Cardiac septum (tissue), 1 donor: ENCODE measurements at regions of chr16 and their contacts with region 1.

Region 1: DNA sequence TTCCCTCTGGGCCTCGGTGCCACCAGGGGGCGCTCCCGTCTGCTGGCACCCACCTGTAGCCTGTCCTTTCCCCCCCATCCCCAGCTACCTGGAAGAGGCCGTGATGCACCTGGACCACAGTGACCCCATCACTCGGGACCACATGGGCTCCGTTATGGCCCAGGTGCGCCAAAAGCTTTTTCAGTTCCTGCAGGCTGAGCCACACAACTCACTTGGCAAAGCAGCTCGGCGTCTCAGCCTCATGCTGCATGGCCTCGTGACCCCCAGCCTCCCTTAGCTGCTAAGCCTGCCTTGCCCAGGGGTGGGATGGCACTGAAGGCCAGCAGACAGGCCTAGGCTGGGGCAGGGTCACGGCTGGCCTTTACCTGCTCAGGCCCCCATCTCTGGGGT is 818 bp upstream of the NRN1L start:
- DNase-seq: no peak

Region 2: DNA sequence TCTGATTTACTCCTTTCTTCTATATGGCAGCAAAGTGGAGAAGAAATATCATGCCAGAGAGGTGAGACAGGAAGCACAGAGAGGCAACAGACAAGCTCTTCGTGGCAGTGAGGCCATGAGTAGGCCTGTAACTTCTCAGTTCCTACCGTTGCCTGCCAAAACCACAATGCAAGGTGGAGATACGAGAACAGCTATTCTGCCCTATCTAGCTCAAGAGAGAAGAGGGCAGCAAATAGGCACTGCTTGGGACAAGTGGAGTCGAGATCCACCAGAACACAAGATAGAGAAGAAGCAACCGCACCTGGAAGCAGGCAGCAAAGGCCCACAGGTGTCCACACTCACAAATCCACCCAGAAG is 102.3 kb before region 1 on chr16:
- intact Hi-C with region 1: no loop called
- DNase-seq: no peak

Region 3: GRCh38 chr16:67928561-67929364 is 44.9 kb after region 1 on chr16:
- intact Hi-C with region 1: loop called (anchors 2 kb)
- DNase-seq: no peak

Region 4: GRCh38 chr16:68237243-68238028 is 353.6 kb after region 1 on chr16:
- intact Hi-C with region 1: loop called (anchors 10 kb)
- DNase-seq: peak; percentile 98